ENCODE measurements at regions of chr1 and their contacts with region 1.

Region 1: DNA sequence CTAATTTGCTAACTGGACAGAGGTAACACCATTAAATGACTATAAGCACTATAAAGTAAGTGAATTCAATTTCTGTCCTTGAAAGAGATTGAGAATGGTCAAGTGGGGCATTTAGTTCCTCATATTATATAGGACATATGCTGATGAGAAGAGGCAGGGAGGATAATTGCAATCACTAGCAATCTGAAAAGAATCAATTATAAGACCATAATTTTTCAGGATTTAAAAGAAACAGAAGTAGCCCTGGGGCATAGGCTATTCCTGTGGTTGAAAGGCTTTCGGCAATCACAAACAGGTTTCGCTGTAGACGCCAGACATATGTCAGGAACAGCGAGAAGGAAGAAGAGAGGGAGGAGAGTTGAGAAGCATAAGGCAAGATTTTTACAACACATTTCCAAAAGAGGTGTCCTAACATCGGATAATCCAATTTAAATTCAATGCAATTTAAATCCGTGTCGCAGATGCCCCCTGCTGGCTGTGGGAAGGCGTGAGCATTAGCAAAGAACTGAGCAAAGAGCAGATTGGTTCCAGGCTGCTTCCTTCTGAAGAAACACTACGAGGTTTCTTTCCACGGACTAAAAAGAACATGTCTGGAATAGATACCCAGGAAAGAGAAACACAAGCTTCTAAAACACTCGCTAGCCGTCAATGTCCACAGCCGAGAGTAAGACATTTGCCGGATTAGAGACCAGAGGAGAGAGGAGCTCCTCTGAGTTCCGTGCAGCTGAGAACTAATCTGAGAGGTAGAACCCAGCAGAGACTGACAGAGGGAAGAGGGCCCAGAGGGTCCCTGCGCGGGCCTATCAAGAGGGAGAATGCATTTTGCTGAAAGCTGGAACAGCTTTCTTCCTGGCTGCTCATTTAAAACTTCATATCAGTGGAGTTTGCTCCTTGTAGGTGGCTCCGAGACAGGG is 27.9 kb downstream of the RGS5 start:
- DNase-seq: peak; percentile 61
- H3K4me3 ChIP-seq: peak overlapping the region; percentile 25
- H3K27ac ChIP-seq: peak overlapping the region; percentile 43
- H3K4me1 ChIP-seq: peaks cover 8% of the 10 kb centered on the region
- H3K27me3 ChIP-seq: no peaks in the 10 kb centered on the region
- CTCF ChIP-seq: peak; percentile 92

Region 2: DNA sequence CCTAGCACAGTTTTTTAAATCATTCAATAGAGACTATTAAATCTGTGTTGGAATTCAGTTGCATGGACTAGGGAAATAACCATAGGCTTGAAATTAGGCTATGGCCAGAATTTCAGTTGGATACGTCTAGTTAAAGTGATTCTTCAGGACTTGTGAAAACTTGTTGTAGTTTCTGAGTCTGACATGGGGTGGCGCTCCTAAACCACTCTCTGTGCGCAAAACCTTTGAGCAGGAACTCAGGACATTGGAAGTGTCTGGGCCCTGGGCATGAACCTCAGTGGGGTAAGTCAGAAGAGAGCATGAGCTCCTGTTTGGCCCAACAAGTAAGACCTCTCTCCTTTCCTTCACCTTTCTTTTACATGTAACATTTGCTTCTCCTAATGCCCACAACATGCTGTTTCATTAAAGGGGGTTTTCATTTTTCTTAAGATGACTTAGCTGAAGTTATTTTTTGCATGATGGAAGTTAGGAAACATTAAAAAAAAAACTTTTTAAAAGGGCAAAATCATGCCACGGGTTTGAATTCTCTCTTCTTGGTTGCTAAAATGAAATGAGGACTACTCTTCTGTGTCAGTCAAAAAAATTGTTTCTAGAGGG is 296.7 kb before region 1 on chr1:
- intact Hi-C with region 1: loop called (anchors 2 kb)
- DNase-seq: peak; percentile 22
- H3K4me3 ChIP-seq: no peak overlapping the region
- H3K27ac ChIP-seq: no peak overlapping the region
- H3K4me1 ChIP-seq: no peaks in the 10 kb centered on the region
- H3K27me3 ChIP-seq: peaks cover 25% of the 10 kb centered on the region
- CTCF ChIP-seq: peak; percentile 79

Region 3: GRCh38 chr1:163071405-163072255 is 103.2 kb before region 1 on chr1:
- intact Hi-C with region 1: loop called (anchors 5 kb)
- DNase-seq: peak; percentile 39
- H3K4me3 ChIP-seq: peak overlapping the region; percentile 57
- H3K27ac ChIP-seq: no peak overlapping the region
- H3K4me1 ChIP-seq: peaks cover 13% of the 10 kb centered on the region
- H3K27me3 ChIP-seq: peaks cover 42% of the 10 kb centered on the region
- CTCF ChIP-seq: peak; percentile 74

Region 4: DNA sequence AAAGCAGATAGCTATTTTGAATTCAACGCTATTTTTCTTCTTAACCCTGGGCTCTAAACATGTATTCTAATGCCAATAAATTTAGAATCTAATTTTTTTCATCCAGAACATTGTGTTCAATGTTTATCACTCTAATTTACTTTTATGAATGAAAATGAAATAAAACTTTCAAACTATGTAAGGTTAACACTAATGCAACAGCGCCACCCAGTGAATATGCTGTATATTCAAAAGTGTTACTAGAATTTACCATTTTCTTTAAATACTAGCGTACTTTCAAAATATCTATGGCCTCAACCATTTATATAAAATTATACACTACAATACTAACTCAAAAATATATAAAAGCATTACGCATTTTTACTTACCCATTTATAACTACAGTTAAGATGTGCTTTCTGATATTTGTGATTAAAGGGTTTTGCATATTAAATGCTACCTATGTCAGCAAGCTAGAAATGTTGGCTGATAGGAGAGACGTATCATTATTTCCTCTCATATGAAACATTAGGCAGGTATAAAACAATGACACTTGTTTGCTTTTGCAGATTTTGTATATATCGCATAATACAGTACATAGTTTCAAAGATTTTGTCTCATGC is 141.1 kb after region 1 on chr1:
- intact Hi-C with region 1: loop called (anchors 10 kb)
- DNase-seq: no peak
- H3K4me3 ChIP-seq: no peak overlapping the region
- H3K27ac ChIP-seq: no peak overlapping the region
- H3K4me1 ChIP-seq: peaks cover 8% of the 10 kb centered on the region
- H3K27me3 ChIP-seq: no peaks in the 10 kb centered on the region
- CTCF ChIP-seq: peak; percentile 75

Measured in left ventricle myocardium inferior (tissue), 1 donor.